ENCODE measurements at regions of chr5 and their contacts with region 1.

Region 1: GRCh38 chr5:69334793-69335268 is 2.2 kb upstream of the CCDC125 start:
- DNase-seq: peak; percentile 82
- H3K4me3 Mint-ChIP-seq: peak overlapping the region; percentile 11
- H3K27ac Mint-ChIP-seq: no peak overlapping the region
- H3K4me1 Mint-ChIP-seq: peaks cover 20% of the 10 kb centered on the region
- H3K27me3 Mint-ChIP-seq: no peaks in the 10 kb centered on the region

Region 2: DNA sequence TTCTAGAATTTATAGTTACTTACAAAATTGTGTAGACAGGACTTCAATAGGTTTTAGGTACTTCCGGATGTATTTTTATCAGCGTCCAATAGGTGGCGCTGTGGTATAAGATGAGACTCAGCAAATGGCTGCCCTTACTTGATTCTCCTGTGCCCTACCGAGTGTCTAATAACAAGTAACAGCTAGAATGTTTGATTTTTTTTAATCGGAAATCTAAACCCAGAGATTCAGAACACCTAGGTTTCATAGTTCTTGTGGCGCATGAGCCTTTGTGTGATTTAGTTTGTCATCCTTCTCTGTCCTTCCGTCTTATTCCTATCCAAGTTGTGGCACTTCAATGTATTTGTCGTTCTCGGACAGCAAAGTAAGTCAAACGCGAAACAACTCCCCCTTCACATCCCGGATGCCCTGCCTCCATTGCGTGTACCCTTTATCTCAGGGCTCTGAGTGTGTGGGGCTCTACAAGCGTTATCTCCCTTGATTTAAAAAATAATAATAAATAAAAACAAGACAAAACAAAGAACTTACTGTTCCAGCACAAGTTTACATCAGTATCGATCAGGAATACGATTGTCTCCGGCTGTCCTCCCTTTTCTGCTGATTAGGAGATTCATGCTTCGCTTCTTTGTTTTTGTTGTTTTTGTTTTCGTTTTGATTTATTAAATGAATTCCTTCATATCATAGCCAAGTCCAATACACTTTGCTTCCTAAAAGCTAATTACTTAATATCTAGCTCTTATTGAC is 291.7 kb before region 1 on chr5:
- CTCF ChIA-PET with region 1: interaction called, 11 read pairs
- POLR2A ChIA-PET with region 1: no interaction called
- DNase-seq: peak; percentile 81
- H3K4me3 Mint-ChIP-seq: peak overlapping the region; percentile 74
- H3K27ac Mint-ChIP-seq: peak overlapping the region; percentile 74
- H3K4me1 Mint-ChIP-seq: peaks cover 17% of the 10 kb centered on the region
- H3K27me3 Mint-ChIP-seq: no peaks in the 10 kb centered on the region

Region 3: DNA sequence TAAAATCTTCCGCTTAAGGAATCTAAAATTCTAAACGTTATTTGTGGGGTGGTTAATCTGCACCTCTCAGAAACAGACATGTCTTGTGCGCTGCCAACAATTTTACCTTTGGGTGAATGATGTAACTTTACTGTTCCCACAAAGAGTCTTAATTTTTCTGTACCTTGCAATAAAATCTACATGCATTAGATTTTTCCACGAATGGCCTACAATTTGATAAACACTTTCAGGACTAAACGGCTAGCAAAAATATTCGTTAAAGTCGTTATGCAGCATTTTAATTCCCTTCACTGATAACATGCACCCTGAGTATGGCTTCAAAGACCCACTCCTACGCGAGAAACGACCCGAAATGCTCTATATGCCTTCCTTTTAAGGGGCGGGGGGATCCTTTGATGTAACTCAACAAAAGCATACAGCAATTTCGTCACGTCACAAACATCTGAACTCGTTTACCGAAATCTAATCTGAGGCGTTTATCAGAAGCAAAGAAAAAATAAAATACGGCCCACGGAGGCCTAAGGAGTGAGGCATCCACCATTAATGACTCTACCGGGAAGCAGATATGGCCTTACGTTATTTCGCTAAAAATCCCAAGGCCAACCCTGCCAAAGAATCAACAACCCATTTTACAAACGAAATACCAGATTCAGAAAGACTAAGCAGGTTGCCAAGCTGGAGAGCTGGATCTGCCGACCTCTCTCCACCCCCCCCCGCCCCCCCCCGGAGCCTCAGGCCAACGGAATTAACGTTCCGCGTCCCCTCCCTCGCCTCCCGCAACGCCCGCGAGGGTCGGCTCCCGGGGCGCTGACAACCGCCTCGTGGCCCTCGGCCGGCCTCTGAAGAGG is 33.9 kb after region 1 on chr5:
- CTCF ChIA-PET with region 1: interaction called, 15 read pairs
- POLR2A ChIA-PET with region 1: interaction called, 9 read pairs
- DNase-seq: no peak
- H3K4me3 Mint-ChIP-seq: peak overlapping the region; percentile 97
- H3K27ac Mint-ChIP-seq: peak overlapping the region; percentile 95
- H3K4me1 Mint-ChIP-seq: peaks cover 44% of the 10 kb centered on the region
- H3K27me3 Mint-ChIP-seq: no peaks in the 10 kb centered on the region

Measured in activated CD4-positive, alpha-beta memory T cell treated with anti-CD3 and anti-CD28 coated beads, Interleukin-2, amount 10 ng/mL, durations not matched to agents 7 days and 5 days (primary cell).